Dorsolateral prefrontal cortex (tissue), 120 donors: ENCODE measurements at regions of chr14 and their contacts with region 1.

Region 1: GRCh38 chr14:104650057-104650981 is 39.1 kb upstream of the INF2 start:
- DNase-seq: peak in 8 of 10 donors; percentile 59 to 83 (median 74)
- H3K4me3 ChIP-seq: peak overlapping the region; percentile 22 to 76 (median 65)
- H3K27ac ChIP-seq: peak overlapping the region in 31 of 59 donors; percentile 14 to 90 (median 54)
- H3K27me3 ChIP-seq: no peaks in the 10 kb centered on the region
- CTCF ChIP-seq: peak; percentile 83 to 100 (median 97)

Region 2: GRCh38 chr14:104580961-104581360 is 69.4 kb before region 1 on chr14:
- intact Hi-C with region 1: no loop called
- DNase-seq: no peak
- H3K4me3 ChIP-seq: no peak overlapping the region
- H3K27ac ChIP-seq: no peak overlapping the region
- H3K27me3 ChIP-seq: peaks cover 0 to 12% (median 0%) of the 10 kb centered on the region in 45 donors
- CTCF ChIP-seq: no peak

Region 3: DNA sequence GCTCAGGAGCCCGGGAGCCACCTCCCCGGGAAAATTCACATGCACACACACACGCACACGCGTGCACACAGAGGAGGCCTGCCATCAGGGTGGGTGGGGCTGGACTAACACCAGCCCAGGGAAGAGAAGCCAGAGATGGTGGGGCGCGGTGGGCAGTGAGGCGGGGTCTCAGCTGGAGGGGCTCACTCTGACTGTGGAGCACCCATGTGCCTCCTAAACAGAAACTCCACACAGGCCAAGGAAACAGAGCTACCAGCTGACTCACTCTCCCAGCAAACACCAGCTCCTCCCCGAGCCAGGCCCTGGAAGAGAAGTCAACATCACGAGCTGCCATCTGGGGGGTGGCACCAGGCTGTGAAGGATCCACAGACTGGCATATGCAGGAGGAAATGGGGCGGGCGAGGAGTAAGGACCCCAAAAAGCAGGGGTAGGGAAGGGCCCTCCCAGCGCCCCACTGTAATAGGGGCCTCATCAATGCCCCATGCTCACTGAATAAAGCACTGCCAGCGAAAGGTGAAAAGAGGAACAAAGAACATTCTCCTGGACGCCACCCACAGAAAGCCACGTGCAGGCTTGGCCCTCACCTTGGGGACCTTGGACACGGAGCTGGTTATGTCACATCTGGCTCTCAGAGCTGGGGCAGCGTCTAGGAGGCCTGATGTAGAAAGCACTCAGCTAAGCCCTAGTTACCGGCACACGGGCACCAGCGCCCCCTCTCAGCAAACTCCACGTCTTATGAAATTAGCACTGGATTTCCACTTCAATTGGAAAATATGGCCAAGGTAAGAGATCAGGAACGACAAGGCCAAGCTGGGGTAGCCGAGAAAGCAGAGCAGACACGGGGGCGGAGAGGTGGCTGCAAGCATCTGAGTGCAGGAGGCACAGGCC is 30.7 kb after region 1 on chr14:
- intact Hi-C with region 1: loop called in 1 of 2 experiments (anchors 2 kb)
- DNase-seq: peak in 8 of 10 donors; percentile 86 to 94 (median 91)
- H3K4me3 ChIP-seq: peak overlapping the region; percentile 21 to 68 (median 49)
- H3K27ac ChIP-seq: peak overlapping the region; percentile 75 to 100 (median 99)
- H3K27me3 ChIP-seq: no peaks in the 10 kb centered on the region
- CTCF ChIP-seq: peak in 50 of 56 donors; percentile 8 to 70 (median 46)

Region 4: DNA sequence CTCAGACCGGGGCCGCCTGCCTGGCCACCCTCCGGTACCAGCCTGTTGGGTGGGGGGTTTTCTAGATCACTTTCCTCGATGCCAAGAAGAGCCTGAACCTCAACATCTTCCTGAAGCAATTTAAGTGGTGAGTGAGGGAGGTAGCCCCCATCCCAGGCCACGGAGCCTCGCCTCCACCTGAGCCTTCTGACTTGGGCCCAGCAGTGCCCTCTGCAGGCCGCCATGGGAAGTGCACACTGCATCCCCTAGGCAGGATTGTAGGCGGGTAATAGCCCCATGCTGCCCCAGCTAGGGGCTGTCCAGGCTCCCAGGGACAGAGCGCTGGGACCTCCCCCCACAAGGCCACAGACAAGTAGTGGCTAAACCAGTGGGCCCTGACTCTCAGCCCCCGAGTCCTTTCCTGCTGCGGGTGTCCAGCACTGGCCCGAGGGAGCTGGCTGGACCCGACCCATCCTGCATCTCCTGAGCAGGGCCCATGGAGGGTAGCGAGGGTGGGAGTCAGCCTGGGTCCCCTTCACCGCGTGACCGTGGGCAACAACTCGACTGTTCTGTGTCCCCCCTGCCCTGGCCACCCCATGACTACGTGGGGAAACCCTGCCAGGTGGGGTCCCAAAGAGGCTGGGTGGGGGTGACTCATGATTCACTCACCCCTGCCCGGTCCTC is 58.4 kb after region 1 on chr14:
- intact Hi-C with region 1: loop called (anchors 1 to 2 kb)
- DNase-seq: peak in 8 of 10 donors; percentile 49 to 82 (median 74)
- H3K4me3 ChIP-seq: no peak overlapping the region
- H3K27ac ChIP-seq: peak overlapping the region in 53 of 59 donors; percentile 1 to 86 (median 70)
- H3K27me3 ChIP-seq: no peaks in the 10 kb centered on the region
- CTCF ChIP-seq: peak; percentile 92 to 100 (median 98)